GM23248 (cell line): ENCODE measurements at regions of chr12 and their contacts with region 1.

Region 1: GRCh38 chr12:64088431-64089349 is 133.4 kb downstream of the KICS2 start:
- DNase-seq: peak; percentile 96
- H3K4me3 ChIP-seq: peak overlapping the region; percentile 45
- H3K27ac ChIP-seq: peak overlapping the region; percentile 85
- H3K4me1 ChIP-seq: peaks cover 66% of the 10 kb centered on the region
- H3K27me3 ChIP-seq: no peaks in the 10 kb centered on the region

Region 2: GRCh38 chr12:63843721-63844390 is 244.8 kb before region 1 on chr12:
- in situ Hi-C with region 1: loop called (anchors 25 kb)
- DNase-seq: peak; percentile 98
- H3K4me3 ChIP-seq: peak overlapping the region; percentile 99
- H3K27ac ChIP-seq: peak overlapping the region; percentile 77
- H3K4me1 ChIP-seq: peaks cover 21% of the 10 kb centered on the region
- H3K27me3 ChIP-seq: no peaks in the 10 kb centered on the region

Region 3: GRCh38 chr12:65500091-65500900 is 1411.6 kb after region 1 on chr12:
- in situ Hi-C with region 1: no loop called
- DNase-seq: peak; percentile 36
- H3K4me3 ChIP-seq: no peak overlapping the region
- H3K27ac ChIP-seq: no peak overlapping the region
- H3K4me1 ChIP-seq: peaks cover 12% of the 10 kb centered on the region
- H3K27me3 ChIP-seq: no peaks in the 10 kb centered on the region